Activated naive CD4-positive, alpha-beta T cell treated with anti-CD3 and anti-CD28 coated beads, Interleukin-2, amount 10 ng/mL, durations not matched to agents 7 days and 5 days (primary cell): ENCODE measurements at regions of chr13 and their contacts with region 1.

Region 1: DNA sequence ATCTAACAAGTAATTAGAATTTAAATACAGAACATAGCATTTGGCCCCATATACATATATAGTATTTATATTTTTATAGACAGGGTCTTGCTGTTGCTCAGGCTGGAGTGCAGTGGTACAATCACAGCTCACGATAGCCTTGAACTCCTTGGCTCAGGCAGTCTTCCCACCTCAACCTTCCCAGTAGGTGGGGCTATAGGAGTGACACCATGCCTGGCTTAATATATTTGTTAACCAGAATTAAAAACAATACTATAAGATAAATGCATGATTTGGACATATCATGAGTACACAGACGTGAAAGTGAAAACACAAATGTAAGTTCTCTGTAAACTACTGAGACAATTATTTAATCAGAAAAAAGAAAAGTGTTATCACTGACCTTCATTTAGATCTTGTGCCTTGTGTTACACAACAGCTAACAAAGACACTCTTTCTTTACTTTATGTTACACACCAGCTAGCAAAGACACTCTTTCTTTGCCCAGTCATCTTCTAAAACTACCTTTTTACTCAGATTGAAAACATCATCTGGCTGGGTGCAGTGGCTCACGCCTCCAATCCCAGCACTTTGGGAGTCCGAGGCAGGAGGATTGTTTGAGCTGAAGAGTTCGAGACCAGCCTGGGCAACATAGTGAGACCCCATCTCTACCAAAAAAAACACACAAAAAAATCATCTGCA is 22.6 kb downstream of the CARS2 start:
- DNase-seq: peak; percentile 54
- H3K4me3 Mint-ChIP-seq: no peak overlapping the region
- H3K27ac Mint-ChIP-seq: peak overlapping the region; percentile 49
- H3K4me1 Mint-ChIP-seq: no peaks in the 10 kb centered on the region
- H3K27me3 Mint-ChIP-seq: no peaks in the 10 kb centered on the region

Region 2: DNA sequence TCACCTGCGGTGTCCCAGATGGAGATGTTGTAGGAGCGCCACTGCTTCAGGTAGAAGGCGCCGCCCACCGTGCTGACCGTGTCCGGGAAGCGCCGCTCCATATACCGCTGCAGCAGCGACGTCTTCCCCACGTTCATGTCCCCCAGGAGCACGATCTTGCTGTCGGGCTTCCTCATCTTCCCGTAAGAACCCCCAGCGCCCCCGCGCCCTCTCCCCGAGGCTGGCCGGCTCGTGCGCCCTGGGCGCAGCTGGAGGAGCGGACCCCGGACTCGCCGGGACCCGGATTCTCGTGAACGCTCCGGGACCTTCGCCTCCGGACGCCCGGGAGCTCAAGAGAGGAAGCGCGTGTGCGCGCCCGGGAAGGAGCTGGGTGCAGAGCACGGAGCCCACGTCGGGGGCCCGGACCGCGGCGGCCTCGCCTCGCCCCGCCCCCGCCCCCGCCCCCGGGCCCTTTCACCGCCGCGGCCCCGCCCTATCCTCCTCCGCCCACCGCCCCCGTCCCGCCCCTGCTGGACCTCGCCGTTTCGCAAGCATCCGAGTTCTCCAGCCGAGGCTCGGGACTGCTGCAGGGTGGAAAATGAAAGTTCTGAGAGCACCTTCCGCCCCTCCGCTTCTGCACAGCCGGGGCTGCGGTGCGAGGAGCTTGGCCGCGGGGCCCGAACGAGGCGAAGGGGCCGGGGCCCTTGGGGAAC is 121.9 kb before region 1 on chr13 and contains the start of gene RAB20:
- CTCF ChIA-PET with region 1: no interaction called
- DNase-seq: peak; percentile 80
- H3K4me3 Mint-ChIP-seq: peak within 1 kb of the TSS; percentile 89
- H3K27ac Mint-ChIP-seq: peak within 1 kb of the TSS; percentile 85
- H3K4me1 Mint-ChIP-seq: peaks cover 44% of the 10 kb centered on the region
- H3K27me3 Mint-ChIP-seq: peaks cover 54% of the 10 kb centered on the region

Region 3: GRCh38 chr13:110819203-110820014 is 136.1 kb after region 1 on chr13:
- CTCF ChIA-PET with region 1: interaction called, 12 read pairs
- DNase-seq: peak; percentile 83
- H3K4me3 Mint-ChIP-seq: no peak overlapping the region
- H3K27ac Mint-ChIP-seq: no peak overlapping the region
- H3K4me1 Mint-ChIP-seq: peaks cover 9% of the 10 kb centered on the region
- H3K27me3 Mint-ChIP-seq: peaks cover 27% of the 10 kb centered on the region